ENCODE measurements at regions of chr7 and their contacts with region 1.

Region 1: DNA sequence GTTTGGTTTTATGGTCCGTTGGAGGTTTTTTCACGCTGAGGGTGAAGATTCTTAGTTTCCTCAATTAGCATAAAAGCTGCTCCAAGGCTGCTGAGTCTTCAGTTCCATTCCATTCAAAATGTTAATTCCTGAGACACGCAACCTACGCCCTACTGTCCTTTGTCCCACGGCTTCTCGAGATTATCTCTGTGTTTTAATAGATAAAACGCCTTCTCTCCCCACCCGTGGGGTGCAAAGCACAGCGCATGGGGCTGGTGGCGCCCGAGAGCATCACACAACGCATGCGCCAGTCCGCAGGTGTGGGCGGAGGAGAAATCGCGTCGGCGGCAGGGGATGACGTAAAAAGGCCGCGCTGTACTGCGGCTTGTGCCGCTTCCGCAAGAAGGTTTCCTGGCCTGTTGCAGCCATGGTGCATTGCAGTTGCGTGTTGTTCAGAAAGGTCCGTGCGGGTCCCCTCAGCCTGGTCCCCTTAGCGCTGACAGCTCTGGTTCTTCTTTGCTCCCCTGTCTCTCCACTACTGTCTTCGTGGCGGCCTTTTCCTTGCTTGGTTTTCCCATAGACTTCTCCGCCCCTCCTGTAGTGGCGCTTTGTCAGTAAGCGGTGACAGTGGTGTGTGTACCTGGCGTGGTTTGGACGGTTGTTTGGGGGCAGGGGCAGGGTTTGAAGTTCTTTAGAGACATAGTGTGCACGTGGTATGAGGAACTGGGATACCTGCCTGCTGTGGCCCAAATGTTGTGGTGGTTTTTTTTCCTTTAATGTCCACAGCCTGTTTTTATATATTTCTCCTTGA is at the start of gene GTPBP10:
- DNase-seq: peak; percentile 98
- H3K4me3 Mint-ChIP-seq: peak within 1 kb of the TSS; percentile 97
- H3K27ac Mint-ChIP-seq: peak within 1 kb of the TSS; percentile 99
- H3K4me1 Mint-ChIP-seq: peaks cover 31% of the 10 kb centered on the region
- H3K27me3 Mint-ChIP-seq: peaks cover 2% of the 10 kb centered on the region
- total RNA-seq, gene GTPBP10: 37.1 and 37.7 TPM in 2 replicates

Region 2: DNA sequence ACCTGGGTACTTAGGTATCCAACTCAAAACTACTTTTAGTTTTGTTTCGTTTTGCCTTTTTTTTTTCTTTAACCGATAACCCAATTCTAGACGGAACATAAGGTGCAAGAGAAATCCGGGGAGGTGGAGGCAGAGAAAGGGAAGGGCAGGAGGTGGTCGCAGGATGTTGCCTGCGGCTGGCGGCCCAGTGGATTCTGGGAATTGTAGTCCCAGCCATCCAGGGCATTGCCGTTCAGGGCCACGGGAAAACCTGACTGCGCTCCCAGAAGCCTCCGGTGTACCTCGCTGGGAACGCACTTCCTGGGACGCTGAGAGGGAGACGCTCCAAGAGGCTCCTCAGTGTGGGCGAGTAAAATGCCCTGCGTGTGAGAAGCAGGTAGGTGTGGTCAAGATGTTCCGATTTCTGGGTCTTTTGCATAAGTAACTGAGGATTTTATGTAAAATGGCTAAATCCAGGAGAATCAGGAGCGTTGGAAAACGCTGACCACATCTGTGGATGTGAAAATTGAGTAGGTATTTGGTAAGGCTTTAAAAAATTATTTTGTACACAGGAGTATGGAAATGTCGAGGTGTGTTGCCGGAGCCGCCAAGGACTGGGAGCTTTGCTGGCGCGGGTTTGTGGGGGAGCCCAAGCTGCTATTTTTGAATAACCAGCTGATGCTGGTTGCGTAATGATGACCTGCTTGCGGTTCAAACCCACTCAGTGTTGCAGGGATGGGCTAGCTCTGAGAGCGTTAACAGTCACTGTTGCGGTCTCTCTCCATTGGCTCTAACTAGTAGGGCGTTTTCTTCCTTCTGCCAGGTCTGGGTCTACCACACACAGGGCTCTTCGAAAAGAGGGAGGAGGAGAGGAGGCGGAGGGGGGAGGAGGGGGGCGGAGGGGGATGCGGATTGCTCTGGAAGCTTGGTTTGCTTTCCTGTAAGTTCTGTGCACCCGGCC is 56.9 kb after region 1 on chr7 and contains the start of gene CLDN12:
- intact Hi-C with region 1: loop called (anchors 1 kb)
- DNase-seq: peak; percentile 90
- H3K4me3 Mint-ChIP-seq: peak within 1 kb of the TSS; percentile 93
- H3K27ac Mint-ChIP-seq: peak within 1 kb of the TSS; percentile 89
- H3K4me1 Mint-ChIP-seq: peaks cover 19% of the 10 kb centered on the region
- H3K27me3 Mint-ChIP-seq: peaks cover 16% of the 10 kb centered on the region
- total RNA-seq, gene CLDN12: 3.3 and 4.2 TPM in 2 replicates

Region 3: DNA sequence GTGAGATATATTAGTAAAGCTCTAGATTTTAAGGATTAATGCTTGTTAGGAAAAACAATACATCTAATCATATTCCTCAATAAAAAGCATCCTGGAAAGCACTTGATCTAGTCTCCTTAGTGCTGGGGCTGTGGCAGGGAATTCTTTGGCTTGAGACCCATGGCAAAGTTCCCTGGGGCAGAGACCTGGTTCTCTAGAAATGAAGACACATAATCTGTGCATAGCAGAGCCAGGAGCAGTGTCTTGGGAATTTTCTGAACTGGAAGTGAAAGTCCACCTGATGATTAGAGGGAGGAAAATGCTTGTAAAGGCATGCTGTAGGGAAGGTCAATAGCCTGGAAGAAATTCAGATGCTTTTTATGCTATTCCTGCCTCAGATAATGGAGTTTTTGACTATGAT is 496.9 kb after region 1 on chr7:
- intact Hi-C with region 1: no loop called
- DNase-seq: no peak
- H3K4me3 Mint-ChIP-seq: no peak overlapping the region
- H3K27ac Mint-ChIP-seq: no peak overlapping the region
- H3K4me1 Mint-ChIP-seq: no peaks in the 10 kb centered on the region
- H3K27me3 Mint-ChIP-seq: no peaks in the 10 kb centered on the region